ENCODE measurements at regions of chr1 and their contacts with region 1.

Region 1: GRCh38 chr1:157156058-157156541 is 17.9 kb upstream of the ETV3 start:
- DNase-seq: peak; percentile 73
- ATAC-seq: peak; percentile 80
- H3K4me3 Mint-ChIP-seq: no peak overlapping the region
- H3K27ac Mint-ChIP-seq: no peak overlapping the region
- H3K4me1 Mint-ChIP-seq: peaks cover 3% of the 10 kb centered on the region
- H3K27me3 Mint-ChIP-seq: peaks cover 41% of the 10 kb centered on the region
- CTCF ChIP-seq: peak; percentile 68

Region 2: GRCh38 chr1:156910309-156910782 is 245.8 kb before region 1 on chr1:
- CTCF ChIA-PET with region 1: no interaction called
- POLR2A ChIA-PET with region 1: no interaction called
- intact Hi-C with region 1: loop called (anchors 5 kb)
- DNase-seq: no peak
- ATAC-seq: peak; percentile 54
- H3K4me3 Mint-ChIP-seq: no peak overlapping the region
- H3K27ac Mint-ChIP-seq: no peak overlapping the region
- H3K4me1 Mint-ChIP-seq: no peaks in the 10 kb centered on the region
- H3K27me3 Mint-ChIP-seq: peaks cover 34% of the 10 kb centered on the region
- CTCF ChIP-seq: no peak

Region 3: DNA sequence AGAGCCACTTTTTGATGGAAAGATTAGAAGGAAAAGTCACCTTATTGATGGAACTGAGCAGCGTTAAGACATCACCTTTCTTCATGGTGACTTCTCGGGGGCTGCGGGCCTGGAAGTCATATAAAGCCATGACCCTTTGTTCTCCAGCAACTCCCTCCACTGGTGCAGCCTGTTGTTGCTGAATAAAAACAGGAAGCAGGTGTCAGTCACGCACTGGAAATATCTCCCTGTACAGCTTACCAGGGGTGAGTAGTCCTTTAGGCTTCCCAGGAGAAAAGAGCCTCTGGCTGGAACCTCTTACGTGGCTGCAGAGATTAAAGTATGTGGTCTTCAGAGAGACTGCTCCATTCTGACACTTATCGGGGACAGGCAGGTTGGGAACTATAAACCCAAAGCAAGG is 1498.5 kb after region 1 on chr1:
- CTCF ChIA-PET with region 1: no interaction called
- POLR2A ChIA-PET with region 1: no interaction called
- intact Hi-C with region 1: no loop called
- DNase-seq: no peak
- ATAC-seq: no peak
- H3K4me3 Mint-ChIP-seq: peak overlapping the region; percentile 15
- H3K27ac Mint-ChIP-seq: no peak overlapping the region
- H3K4me1 Mint-ChIP-seq: peaks cover 25% of the 10 kb centered on the region
- H3K27me3 Mint-ChIP-seq: peaks cover 4% of the 10 kb centered on the region
- CTCF ChIP-seq: no peak